Activated CD8-positive, alpha-beta T cell treated with anti-CD3 and anti-CD28 coated beads, Interleukin-2, amount 10 ng/mL, durations not matched to agents 7 days and 5 days (primary cell): ENCODE measurements at regions of chr17 and their contacts with region 1.

Region 1: GRCh38 chr17:28889996-28890395 is 7.5 kb downstream of the FLOT2 start:
- DNase-seq: no peak
- ATAC-seq: peak; percentile 31
- H3K4me3 Mint-ChIP-seq: peak overlapping the region; percentile 32
- H3K27ac Mint-ChIP-seq: peak overlapping the region; percentile 70
- H3K4me1 Mint-ChIP-seq: peaks cover 58% of the 10 kb centered on the region
- H3K27me3 Mint-ChIP-seq: no peaks in the 10 kb centered on the region

Region 2: GRCh38 chr17:28849281-28849680 is 40.7 kb before region 1 on chr17:
- CTCF ChIA-PET with region 1: interaction called, 11 read pairs
- POLR2A ChIA-PET with region 1: no interaction called
- DNase-seq: peak; percentile 32
- ATAC-seq: peak; percentile 53
- H3K4me3 Mint-ChIP-seq: no peak overlapping the region
- H3K27ac Mint-ChIP-seq: no peak overlapping the region
- H3K4me1 Mint-ChIP-seq: peaks cover 10% of the 10 kb centered on the region
- H3K27me3 Mint-ChIP-seq: no peaks in the 10 kb centered on the region

Region 3: GRCh38 chr17:28871056-28871579 is 18.9 kb before region 1 on chr17:
- CTCF ChIA-PET with region 1: interaction called, 21 read pairs
- POLR2A ChIA-PET with region 1: interaction called, 11 read pairs
- DNase-seq: peak; percentile 76
- ATAC-seq: peak; percentile 99
- H3K4me3 Mint-ChIP-seq: no peak overlapping the region
- H3K27ac Mint-ChIP-seq: peak overlapping the region; percentile 97
- H3K4me1 Mint-ChIP-seq: peaks cover 16% of the 10 kb centered on the region
- H3K27me3 Mint-ChIP-seq: no peaks in the 10 kb centered on the region

Region 4: GRCh38 chr17:28912281-28912937 is 22.4 kb after region 1 on chr17:
- CTCF ChIA-PET with region 1: no interaction called
- POLR2A ChIA-PET with region 1: no interaction called
- DNase-seq: no peak
- ATAC-seq: no peak
- H3K4me3 Mint-ChIP-seq: no peak overlapping the region
- H3K27ac Mint-ChIP-seq: no peak overlapping the region
- H3K4me1 Mint-ChIP-seq: no peaks in the 10 kb centered on the region
- H3K27me3 Mint-ChIP-seq: no peaks in the 10 kb centered on the region